ENCODE measurements at regions of chr15 and their contacts with region 1.

Region 1: DNA sequence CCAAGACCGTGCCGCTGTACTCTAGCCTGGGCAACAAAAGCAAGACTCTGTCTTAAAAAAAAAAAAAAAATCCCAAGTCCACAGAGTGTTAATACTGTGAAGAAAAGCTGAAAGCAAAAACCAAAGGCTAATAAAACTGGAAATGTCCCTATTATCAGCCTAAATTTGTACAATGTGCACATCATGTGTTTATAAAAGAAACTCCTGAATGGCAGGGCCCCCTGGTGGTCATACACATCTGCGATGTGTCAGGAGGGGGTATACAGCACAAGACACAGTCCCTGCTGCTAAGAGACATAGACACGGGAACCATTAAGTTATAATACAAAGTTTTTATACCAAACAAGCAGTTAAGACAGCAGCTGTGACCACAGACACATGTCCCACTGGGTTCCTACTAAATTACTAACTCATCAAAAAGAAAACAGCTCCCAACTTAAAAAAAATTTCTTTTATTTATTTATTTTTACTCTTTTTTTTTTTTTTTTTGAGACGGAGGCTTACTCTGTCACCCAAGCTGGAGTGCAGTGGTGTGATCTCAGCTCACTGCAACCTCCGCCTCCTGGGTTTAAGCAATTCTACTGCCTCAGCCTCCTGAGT is 31.0 kb downstream of the IDH2 start:
- DNase-seq: peak; percentile 77
- CTCF ChIP-seq: peak; percentile 76

Region 2: GRCh38 chr15:89893696-89894455 is 177.4 kb before region 1 on chr15 and contains the start of gene AP3S2:
- CTCF ChIA-PET with region 1: interaction called, 20 read pairs
- POLR2A ChIA-PET with region 1: no interaction called
- DNase-seq: peak; percentile 88
- CTCF ChIP-seq: no peak

Region 3: GRCh38 chr15:90001683-90002427 is 69.5 kb before region 1 on chr15:
- CTCF ChIA-PET with region 1: interaction called, 19 read pairs
- POLR2A ChIA-PET with region 1: no interaction called
- DNase-seq: peak; percentile 82
- CTCF ChIP-seq: no peak

Region 4: DNA sequence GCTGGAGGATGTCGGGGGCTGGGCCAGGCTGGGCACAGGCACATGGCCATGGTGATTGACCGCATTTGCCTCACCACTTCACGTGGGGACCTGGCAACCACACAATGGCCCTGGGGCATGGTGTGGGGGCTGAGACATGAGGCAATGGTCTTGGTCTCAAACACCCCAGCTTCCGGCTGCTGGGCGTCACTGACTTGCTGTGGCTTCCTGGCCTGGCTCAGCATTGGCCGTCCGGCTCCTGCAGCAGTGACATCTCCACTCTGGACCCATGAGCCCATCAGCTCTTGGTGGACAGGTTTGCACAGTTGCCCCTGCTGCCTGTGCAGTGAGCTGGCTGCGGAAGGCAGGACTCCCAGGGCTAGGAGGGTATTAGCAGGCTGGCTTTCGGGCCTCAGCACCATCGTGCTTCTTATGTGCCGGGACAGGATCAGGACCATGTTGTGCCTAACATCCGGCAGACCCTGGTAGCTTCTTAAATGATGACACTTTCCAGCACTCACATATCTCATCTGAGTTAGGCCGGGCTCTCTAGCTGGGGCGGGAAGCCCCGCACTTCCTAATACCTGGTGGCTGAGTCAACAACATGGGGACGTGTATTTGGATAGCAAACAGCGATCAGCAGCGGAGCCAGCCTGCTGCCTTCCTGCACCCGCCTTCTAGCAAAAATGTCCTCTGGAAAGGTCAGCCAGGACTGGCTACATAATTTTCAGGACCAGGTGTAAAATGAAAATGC is 36.0 kb before region 1 on chr15:
- CTCF ChIA-PET with region 1: interaction called, 11 read pairs
- POLR2A ChIA-PET with region 1: no interaction called
- DNase-seq: no peak
- CTCF ChIP-seq: no peak

Region 5: DNA sequence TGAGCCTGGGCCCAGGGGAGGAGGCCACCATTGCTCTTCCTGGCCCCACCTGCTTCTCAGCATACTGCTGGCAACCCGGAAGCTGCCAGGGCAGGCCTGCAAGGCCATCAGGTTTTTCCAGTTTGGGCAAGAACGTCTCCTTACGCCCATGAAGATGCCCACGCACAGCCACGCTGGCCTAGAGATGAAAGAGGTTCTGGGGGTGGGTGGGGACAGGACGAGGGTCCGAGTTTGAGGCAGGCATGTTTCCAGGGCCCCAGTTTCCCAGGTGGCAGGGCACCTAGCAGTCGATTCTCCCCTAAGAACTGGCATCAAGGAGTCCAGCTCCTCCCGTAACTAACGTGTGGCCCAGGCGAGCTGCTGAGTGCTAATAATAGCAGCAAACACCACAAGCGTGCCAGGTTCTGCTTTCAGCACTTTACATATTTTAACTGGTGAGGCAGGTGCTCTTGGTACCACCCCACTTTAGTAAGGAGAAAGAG is 24.4 kb before region 1 on chr15:
- CTCF ChIA-PET with region 1: interaction called, 28 read pairs
- POLR2A ChIA-PET with region 1: no interaction called
- DNase-seq: peak; percentile 50
- CTCF ChIP-seq: no peak

Region 6: DNA sequence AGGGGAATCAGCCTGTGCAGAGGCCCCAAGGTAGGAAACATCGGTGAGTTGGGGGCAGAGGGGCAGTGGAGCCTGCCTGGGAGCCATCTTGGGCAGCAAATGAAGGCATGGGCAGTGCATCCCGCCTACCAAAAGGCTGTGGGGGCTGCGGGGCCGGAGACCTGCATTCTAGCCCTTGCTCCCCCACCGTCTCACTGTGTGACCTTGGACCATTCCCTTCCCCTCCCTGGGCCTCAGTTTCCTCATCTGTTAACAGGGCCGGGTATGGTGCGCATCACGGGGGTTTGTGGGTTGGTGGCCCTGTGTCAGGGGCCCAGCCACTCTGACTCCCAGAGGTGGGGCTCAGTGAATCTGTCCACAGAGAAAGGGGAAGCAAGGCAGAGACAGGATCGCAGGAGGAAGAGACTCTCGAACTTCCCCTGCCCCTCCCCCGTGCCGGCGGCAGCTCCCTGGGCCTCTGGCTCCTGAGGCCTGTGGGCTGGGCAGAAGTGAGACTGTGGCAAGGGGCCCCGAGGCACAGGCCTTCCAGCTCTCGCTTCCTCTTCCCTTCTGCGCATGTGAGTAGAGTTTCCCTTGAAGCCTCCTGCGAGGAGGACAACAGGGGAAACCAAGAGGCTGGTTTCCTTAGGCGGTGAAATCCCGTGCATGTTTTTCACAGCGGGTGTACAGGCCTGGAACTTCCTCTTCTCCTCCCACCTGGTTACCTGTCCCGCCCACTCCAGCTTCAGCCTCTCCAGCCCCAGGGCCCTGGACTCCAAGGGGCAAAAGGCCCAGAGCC is 11.9 kb before region 1 on chr15:
- CTCF ChIA-PET with region 1: interaction called, 31 read pairs
- POLR2A ChIA-PET with region 1: no interaction called
- DNase-seq: peak; percentile 88
- CTCF ChIP-seq: no peak

Region 7: DNA sequence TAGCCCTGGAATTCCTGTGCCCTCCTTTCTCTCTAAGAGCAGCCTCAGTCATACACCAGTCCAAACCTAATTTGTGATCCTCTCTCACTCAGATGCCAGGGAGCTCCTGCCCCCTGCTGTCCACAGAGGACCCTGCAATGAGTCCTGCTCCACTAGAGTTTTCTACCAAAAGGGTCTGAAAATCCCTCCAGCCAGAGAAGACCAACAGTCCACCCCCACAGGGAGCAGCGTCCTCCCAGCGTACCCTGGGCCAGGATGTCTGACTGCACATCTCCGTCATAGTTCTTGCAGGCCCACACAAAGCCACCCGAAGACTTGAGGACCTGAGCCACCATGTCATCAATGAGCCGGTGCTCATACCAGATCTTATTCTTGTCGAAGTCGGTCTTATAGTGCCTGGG is 15.6 kb after region 1 on chr15:
- CTCF ChIA-PET with region 1: interaction called, 27 read pairs
- POLR2A ChIA-PET with region 1: no interaction called
- DNase-seq: peak; percentile 71
- CTCF ChIP-seq: peak; percentile 71

Region 8: GRCh38 chr15:90106522-90107117 is 35.3 kb after region 1 on chr15:
- CTCF ChIA-PET with region 1: no interaction called
- POLR2A ChIA-PET with region 1: no interaction called
- DNase-seq: no peak
- CTCF ChIP-seq: no peak

Region 9: DNA sequence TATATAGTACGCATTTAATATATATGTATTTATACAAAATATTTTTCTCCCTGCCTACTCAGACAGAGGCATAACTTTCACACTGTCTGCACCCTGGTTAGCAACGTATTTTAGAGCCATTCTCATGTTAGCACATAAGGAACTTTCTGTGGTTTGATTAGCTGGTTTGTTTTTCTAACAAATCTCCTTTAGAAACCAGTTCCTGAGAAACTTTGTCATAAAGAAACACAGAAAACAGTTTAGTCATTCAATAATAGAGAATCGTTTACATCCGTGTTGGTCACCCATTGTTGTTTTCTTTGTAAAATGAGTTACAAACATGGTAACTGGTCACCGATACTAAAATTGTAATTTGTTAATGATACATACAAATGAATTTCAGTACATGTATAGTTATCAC is 188.2 kb after region 1 on chr15:
- CTCF ChIA-PET with region 1: no interaction called
- POLR2A ChIA-PET with region 1: no interaction called
- DNase-seq: peak; percentile 40
- CTCF ChIP-seq: no peak

Measured in GM10248 (cell line).